Pancreas (tissue), 10 donors: ENCODE measurements at regions of chr6 and their contacts with region 1.

Region 1: GRCh38 chr6:149729824-149730223 is 11.9 kb upstream of the LATS1 start:
- DNase-seq: no peak
- ATAC-seq: no peak
- H3K4me3 ChIP-seq: no peak overlapping the region
- H3K27ac ChIP-seq: no peak overlapping the region
- H3K4me1 ChIP-seq: no peaks in the 10 kb centered on the region
- H3K27me3 ChIP-seq: no peaks in the 10 kb centered on the region
- CTCF ChIP-seq: no peak

Region 2: DNA sequence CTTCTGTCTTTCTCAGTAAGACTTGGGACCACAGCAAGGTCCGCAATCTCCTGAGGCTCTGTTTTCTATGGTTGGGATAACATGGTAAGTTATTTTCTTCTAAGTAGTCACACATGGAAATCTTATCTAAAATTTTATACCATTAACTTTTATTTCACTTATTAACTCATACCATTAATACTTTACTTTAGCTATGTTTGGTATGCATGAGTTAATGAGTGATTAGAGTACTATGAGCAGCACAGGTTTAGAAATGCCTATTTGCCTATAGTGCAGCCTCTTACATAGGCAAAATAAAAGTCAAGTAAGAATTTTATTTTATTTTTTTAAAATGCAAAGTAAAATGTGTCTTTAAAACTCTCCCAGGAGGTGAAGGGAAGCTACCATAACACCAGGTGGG is 136.4 kb before region 1 on chr6:
- intact Hi-C with region 1: no loop called
- DNase-seq: no peak
- ATAC-seq: peak in 3 of 4 donors; percentile 43 to 66 (median 48)
- H3K4me3 ChIP-seq: no peak overlapping the region
- H3K27ac ChIP-seq: no peak overlapping the region
- H3K4me1 ChIP-seq: no peaks in the 10 kb centered on the region
- H3K27me3 ChIP-seq: no peaks in the 10 kb centered on the region
- CTCF ChIP-seq: no peak

Region 3: DNA sequence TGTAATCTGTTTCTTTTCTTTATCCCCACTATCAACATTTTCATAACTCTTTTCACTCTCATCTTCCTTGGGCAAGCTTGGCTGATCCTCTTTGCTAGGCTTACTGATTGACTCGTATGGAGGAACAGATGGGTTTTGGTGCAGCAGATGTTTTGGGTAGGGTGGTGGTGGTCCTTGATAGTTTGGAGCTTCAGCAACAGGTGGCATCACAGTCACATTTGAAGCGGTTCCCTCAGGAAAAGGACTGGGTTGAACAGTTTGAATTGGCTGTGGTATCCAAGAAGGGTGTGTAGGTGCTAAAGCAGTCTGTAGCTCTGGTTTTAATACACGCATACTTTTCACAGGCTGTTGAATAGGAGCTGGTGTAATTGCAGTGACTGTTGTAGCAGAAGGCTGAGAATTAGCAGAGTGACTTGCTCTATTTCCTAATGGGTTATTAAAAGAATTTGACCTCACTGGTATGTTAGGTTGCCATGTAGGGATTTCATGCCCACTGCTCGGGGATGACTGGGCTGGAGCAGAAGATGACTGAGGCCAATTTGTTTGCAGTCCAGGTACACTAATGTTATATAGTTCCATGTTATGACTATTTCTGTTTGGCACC is 46.5 kb before region 1 on chr6:
- intact Hi-C with region 1: no loop called
- DNase-seq: no peak
- ATAC-seq: peak in 2 of 4 donors; percentile 18 to 40
- H3K4me3 ChIP-seq: no peak overlapping the region
- H3K27ac ChIP-seq: no peak overlapping the region
- H3K4me1 ChIP-seq: no peaks in the 10 kb centered on the region
- H3K27me3 ChIP-seq: no peaks in the 10 kb centered on the region
- CTCF ChIP-seq: no peak

Region 4: GRCh38 chr6:149830731-149831307 is 101.0 kb after region 1 on chr6:
- intact Hi-C with region 1: no loop called
- DNase-seq: no peak
- ATAC-seq: no peak
- H3K4me3 ChIP-seq: no peak overlapping the region
- H3K27ac ChIP-seq: no peak overlapping the region
- H3K4me1 ChIP-seq: no peaks in the 10 kb centered on the region
- H3K27me3 ChIP-seq: no peaks in the 10 kb centered on the region
- CTCF ChIP-seq: no peak

Region 5: DNA sequence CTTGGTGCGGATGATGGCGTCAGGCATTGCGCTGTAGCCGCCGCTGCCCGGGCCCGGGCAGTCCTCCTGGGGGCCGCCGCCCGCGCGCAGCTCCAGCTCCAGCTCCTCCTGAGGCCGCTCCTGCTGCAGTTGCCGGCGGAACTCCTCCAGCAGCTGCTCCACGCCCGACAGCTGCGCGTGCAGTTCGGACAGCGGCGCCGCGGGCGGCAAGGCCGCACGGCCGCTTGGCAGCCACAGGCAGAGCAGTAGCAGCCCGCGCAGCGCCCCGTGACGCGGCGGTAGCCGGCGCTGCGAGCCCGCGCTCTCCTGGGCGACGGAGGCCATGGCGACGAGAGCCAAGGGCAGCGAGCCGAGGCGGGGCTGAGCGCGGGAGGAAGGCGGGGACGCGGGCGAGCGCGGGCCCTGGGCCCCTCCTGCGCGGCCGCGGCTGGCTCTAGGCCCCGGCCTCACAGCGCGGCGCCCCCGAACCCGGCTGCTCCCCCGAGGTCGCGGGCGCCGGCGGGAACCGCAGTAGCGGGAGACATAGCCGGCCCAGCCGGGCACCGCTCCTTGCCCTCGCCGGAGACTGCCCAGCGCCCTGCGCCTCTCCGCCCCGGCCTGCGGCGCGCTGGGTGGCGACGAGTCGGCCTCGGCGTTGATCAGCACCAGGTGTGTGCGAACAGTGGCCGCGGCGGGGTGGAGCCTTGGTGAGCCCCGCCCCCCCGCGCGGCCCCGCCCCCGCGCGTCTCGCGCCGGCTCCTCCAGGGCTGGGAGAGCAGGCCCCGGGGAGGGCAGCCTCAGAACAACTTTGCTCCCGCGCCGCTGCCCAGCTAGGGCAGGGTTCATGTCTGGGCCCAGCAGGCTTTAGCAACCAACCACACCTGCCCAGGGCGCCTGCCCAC is 134.1 kb after region 1 on chr6 and contains the start of gene LRP11:
- intact Hi-C with region 1: loop called in 1 of 3 experiments (anchors 10 kb)
- DNase-seq: peak; percentile 87 to 95 (median 90)
- ATAC-seq: peak; percentile 88 to 93 (median 89)
- H3K4me3 ChIP-seq: peak within 1 kb of the TSS; percentile 63 to 86 (median 75)
- H3K27ac ChIP-seq: peak within 1 kb of the TSS; percentile 94 to 96 (median 94)
- H3K4me1 ChIP-seq: peaks cover 0 to 22% (median 10%) of the 10 kb centered on the region in 3 donors
- H3K27me3 ChIP-seq: no peaks in the 10 kb centered on the region
- CTCF ChIP-seq: no peak
- total RNA-seq, gene LRP11: 10.9 to 22.2 (median 15.2) TPM